Head of caudate nucleus (tissue), 42 donors: ENCODE measurements at regions of chr5 and their contacts with region 1.

Region 1: GRCh38 chr5:150700594-150701293 is at the start of gene RBM22:
- DNase-seq: peak; percentile 91 to 98 (median 95)

Region 2: DNA sequence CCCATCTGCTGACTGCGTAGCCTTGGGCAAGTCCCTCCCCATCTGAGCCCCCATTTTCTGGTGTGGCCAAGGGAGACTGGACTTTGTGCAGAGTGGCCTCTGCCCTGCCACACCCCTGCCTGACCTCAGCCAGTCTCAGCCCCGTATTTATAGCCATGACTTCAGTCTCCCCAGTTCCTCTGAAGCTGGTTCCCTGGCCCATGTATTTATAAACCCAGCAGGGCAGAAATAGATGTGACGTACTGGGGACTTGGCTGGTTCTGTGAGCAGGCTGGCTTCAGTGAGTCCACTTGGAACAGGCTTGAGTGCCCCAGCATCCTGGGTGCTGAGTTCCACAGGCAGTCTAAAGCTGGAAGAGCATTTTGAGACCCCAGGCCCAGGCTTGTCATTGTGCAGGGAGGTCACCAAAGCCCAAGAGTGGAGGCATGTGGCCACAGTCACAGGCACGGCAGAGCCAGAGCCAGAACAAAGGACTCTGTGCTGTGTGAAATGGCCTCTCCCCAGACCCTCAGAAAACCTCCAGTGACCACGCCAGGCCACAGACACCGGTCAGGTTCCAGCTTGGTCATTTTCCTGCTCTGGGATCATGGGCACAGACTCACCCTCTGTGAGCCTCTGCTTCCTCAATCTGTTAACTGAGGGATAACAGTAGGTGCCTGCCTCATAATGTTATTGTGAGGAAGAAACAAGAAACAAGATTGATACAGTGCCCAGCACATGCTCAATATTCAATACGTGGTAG is 90.7 kb before region 1 on chr5:
- intact Hi-C with region 1: no loop called
- DNase-seq: peak in 1 of 42 donors; percentile 22

Region 3: DNA sequence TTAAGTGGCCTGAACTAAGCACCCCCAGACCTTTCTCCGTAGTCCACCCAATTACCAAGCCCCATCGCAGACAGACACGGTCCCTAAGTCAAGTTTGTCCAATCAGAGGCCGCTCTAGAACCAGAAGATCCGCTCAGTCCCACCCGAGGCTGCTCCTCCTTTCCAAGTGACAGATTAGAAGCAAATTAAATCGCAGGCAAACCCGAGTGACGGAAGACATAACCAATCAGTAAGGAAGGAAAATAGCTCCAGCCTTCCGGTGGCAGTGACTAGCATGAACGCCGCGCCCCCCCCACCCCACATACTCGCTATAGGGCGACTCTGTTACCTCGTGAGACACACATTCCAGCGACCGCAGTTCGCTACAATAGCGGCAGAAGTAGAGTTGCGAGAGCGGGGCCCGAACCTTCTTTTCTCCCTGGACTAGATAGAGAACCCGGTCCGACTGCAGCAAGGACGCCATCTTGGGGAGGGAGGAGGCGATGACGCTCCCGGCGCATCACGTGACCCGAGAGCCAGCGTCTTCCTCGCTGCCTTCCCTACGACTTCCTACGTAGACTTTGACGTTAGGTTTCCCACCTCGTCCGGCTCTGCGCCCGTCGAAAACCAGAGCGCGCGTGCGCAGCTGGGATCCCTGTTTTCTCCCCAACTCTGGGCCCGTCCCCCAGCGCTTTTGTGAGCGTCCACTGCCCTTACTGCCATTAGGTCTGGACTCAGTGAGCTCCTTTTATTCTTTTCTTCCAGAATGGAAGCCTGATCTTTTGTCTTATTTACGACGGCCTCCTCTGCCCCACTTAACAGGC is 58.0 kb after region 1 on chr5 and contains the start of gene DCTN4:
- intact Hi-C with region 1: loop called (anchors 2 kb)
- DNase-seq: peak; percentile 96 to 99 (median 98)